ENCODE measurements at regions of chr12 and their contacts with region 1.

Region 1: GRCh38 chr12:15590180-15590826 is 198.9 kb downstream of the EPS8 start:
- DNase-seq: peak; percentile 2 to 79 (median 34)
- ATAC-seq: peak; percentile 99
- H3K4me3 ChIP-seq: peak overlapping the region; percentile 15 to 39
- H3K4me3 Mint-ChIP-seq: peak overlapping the region; percentile 80
- H3K27ac ChIP-seq: no peak overlapping the region
- H3K27ac Mint-ChIP-seq: peak overlapping the region; percentile 77
- H3K4me1 ChIP-seq: no peaks in the 10 kb centered on the region
- H3K4me1 Mint-ChIP-seq: peaks cover 9% of the 10 kb centered on the region
- H3K27me3 ChIP-seq: peaks cover 0 to 4% of the 10 kb centered on the region in 2 experiments
- H3K27me3 Mint-ChIP-seq: no peaks in the 10 kb centered on the region
- CTCF ChIP-seq: peak; percentile 88

Region 2: GRCh38 chr12:15268927-15269552 is 321.3 kb before region 1 on chr12:
- CTCF ChIA-PET with region 1: no interaction called
- POLR2A ChIA-PET with region 1: no interaction called
- intact Hi-C with region 1: loop called in 1 of 2 experiments (anchors 5 kb)
- DNase-seq: peak in 5 of 9 experiments; percentile 18 to 71 (median 27)
- ATAC-seq: peak; percentile 72
- H3K4me3 ChIP-seq: no peak overlapping the region
- H3K4me3 Mint-ChIP-seq: no peak overlapping the region
- H3K27ac ChIP-seq: no peak overlapping the region
- H3K27ac Mint-ChIP-seq: no peak overlapping the region
- H3K4me1 ChIP-seq: no peaks in the 10 kb centered on the region
- H3K4me1 Mint-ChIP-seq: no peaks in the 10 kb centered on the region
- H3K27me3 ChIP-seq: no peaks in the 10 kb centered on the region
- H3K27me3 Mint-ChIP-seq: peaks cover 5% of the 10 kb centered on the region
- CTCF ChIP-seq: peak; percentile 89

Region 3: DNA sequence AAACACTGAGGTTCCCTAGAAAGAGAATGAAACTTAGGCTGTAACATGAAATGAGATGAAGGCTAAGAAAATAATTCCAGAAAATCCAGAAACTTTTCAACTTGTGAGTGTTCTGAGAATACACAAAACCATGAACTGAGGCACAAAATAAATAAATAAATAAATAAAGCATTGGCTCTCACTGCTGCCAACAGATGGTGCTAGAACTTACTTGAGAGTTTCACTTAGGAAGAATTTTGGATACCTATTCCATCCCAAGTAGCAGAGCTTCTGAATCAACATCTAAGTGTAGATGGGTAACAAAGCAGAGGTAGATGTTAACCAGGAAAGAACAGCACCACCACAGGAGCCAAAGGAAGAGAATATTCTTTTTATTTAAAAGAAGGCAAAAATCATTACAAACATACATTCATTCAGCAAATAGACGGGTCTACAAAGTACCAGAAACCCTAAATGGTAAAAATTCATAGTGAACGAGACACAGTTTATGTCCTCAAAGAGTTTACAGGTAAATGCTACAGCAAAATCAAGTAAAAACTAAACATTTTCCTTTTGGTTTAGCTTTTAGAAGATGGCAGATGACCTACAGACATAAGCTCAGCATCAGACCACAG is 182.2 kb after region 1 on chr12:
- CTCF ChIA-PET with region 1: no interaction called
- POLR2A ChIA-PET with region 1: no interaction called
- intact Hi-C with region 1: loop called in 1 of 2 experiments (anchors 2 kb)
- DNase-seq: peak in 2 of 9 experiments; percentile 28 to 45
- ATAC-seq: no peak
- H3K4me3 ChIP-seq: no peak overlapping the region
- H3K4me3 Mint-ChIP-seq: no peak overlapping the region
- H3K27ac ChIP-seq: no peak overlapping the region
- H3K27ac Mint-ChIP-seq: no peak overlapping the region
- H3K4me1 ChIP-seq: no peaks in the 10 kb centered on the region
- H3K4me1 Mint-ChIP-seq: no peaks in the 10 kb centered on the region
- H3K27me3 ChIP-seq: no peaks in the 10 kb centered on the region
- H3K27me3 Mint-ChIP-seq: peaks cover 12% of the 10 kb centered on the region
- CTCF ChIP-seq: peak; percentile 39

Region 4: GRCh38 chr12:15789220-15790171 is 199.2 kb after region 1 on chr12 and contains the start of gene EPS8:
- CTCF ChIA-PET with region 1: interaction called, 3 read pairs
- POLR2A ChIA-PET with region 1: no interaction called
- intact Hi-C with region 1: loop called (anchors 1 to 10 kb)
- DNase-seq: peak; percentile 76 to 93 (median 87)
- ATAC-seq: peak; percentile 88
- H3K4me3 ChIP-seq: peak within 1 kb of the TSS; percentile 68 to 87
- H3K4me3 Mint-ChIP-seq: peak within 1 kb of the TSS; percentile 97
- H3K27ac ChIP-seq: peak within 1 kb of the TSS in 1 of 2 experiments; percentile 41
- H3K27ac Mint-ChIP-seq: peak within 1 kb of the TSS; percentile 42
- H3K4me1 ChIP-seq: peaks cover 8% of the 10 kb centered on the region
- H3K4me1 Mint-ChIP-seq: peaks cover 14% of the 10 kb centered on the region
- H3K27me3 ChIP-seq: peaks cover 8 to 15% of the 10 kb centered on the region in 2 experiments
- H3K27me3 Mint-ChIP-seq: peaks cover 39% of the 10 kb centered on the region
- CTCF ChIP-seq: no peak
- total RNA-seq, gene EPS8: 1.7 to 2.1 TPM

Region 5: DNA sequence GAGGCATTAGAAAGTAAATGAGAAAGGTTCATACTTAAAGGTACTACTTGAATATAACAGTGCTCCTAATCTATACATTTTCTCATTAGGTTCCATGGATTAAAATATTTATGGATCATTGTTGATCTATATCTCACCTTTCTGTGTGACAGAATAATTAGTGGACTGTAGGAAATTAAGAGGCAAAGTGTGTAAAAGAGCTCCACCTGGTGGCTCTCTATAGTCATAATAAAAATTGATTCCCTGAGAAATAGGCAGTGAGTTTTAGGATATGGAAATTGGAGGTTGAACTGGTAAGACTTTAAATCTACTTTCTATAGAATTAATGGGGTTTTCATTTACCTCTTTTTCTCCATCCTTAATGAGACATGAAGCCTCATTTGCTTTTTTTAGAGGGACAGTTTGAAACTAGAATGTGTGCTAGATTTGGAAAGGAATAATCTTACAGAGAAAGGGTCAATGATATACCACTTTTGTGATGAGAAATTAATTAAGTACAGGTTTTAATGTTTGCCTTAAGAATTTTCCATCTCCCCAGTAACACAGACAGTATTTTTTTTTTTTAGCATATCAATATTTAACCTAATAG is 309.1 kb after region 1 on chr12:
- CTCF ChIA-PET with region 1: interaction called, 13 read pairs
- POLR2A ChIA-PET with region 1: no interaction called
- intact Hi-C with region 1: loop called (anchors 1 to 2 kb)
- DNase-seq: peak in 2 of 9 experiments; percentile 46 to 62
- ATAC-seq: peak; percentile 44
- H3K4me3 ChIP-seq: no peak overlapping the region
- H3K4me3 Mint-ChIP-seq: no peak overlapping the region
- H3K27ac ChIP-seq: no peak overlapping the region
- H3K27ac Mint-ChIP-seq: peak overlapping the region; percentile 74
- H3K4me1 ChIP-seq: no peaks in the 10 kb centered on the region
- H3K4me1 Mint-ChIP-seq: peaks cover 6% of the 10 kb centered on the region
- H3K27me3 ChIP-seq: no peaks in the 10 kb centered on the region
- H3K27me3 Mint-ChIP-seq: no peaks in the 10 kb centered on the region
- CTCF ChIP-seq: peak; percentile 94

Measured in CD8-positive, alpha-beta T cell (primary cell).